A549 (cell line): ENCODE measurements at regions of chr15 and their contacts with region 1.

Region 1: GRCh38 chr15:57340682-57341259 is 35.5 kb upstream of the CGNL1 start:
- DNase-seq: peak; percentile 50 to 76
- ATAC-seq: peak; percentile 76 to 88; a peak in 5 of 6 replicates
- H3K4me3 ChIP-seq: no peak overlapping the region
- H3K27ac ChIP-seq: no peak overlapping the region
- H3K4me1 ChIP-seq: 0 out of 3 replicates have a peak, but pooled peaks cover 4% of the 10 kb centered on the region
- CTCF ChIP-seq: peak; percentile 99
- EP300 ChIP-seq: no peak
- POLR2A ChIP-seq: no peak
- RAD21 ChIP-seq: peak; percentile 100

Region 2: DNA sequence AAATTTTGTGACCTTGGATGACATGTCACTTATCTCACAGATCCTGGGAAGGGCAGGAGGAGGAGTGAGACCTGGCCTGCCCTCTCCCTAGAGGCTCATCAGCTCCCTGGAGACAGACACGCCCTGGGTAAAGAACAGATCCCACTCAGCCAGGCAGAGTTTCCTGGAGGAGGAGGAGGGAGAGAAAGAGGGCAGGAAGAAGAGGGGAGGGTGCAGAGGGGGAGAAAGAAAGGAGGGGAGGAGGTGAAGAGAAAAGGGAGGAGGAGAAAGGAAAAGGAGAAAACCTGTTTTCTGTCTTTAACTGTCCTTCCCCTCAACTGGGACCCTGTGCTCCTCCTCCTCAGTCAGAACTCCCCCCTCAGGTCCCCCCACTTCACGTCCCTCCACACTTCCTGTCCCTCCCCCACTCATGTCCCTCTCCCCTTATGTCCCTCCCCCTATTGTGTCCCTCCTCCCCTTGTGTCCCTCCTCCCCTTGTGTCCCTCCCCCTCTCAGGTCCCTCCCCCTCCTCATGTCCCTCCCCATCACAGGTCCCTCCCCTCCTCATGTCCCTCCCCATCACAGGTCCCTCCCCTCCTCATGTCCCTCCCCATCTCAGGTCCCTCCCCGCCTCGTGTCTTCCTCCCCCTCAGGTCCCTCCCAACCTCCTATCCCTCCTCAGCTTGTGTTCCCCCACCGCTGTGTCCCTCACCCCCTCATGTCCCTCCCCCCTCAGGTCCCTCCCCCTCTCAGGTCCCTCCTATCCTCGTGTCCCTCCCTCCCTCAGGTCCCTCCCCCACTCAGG is 16.8 kb before region 1 on chr15:
- CTCF ChIA-PET with region 1: interaction called, 98 read pairs
- POLR2A ChIA-PET with region 1: no interaction called
- DNase-seq: peak; percentile 96 to 98
- ATAC-seq: peak; percentile 85 to 94
- H3K4me3 ChIP-seq: peak overlapping the region; percentile 32
- H3K27ac ChIP-seq: peak overlapping the region; percentile 91 to 95
- H3K4me1 ChIP-seq: peaks cover 31% of the 10 kb centered on the region
- CTCF ChIP-seq: no peak
- EP300 ChIP-seq: no peak
- POLR2A ChIP-seq: no peak
- RAD21 ChIP-seq: no peak

Region 3: GRCh38 chr15:57375827-57376695 is 35.3 kb after region 1 on chr15 and contains the start of gene CGNL1:
- CTCF ChIA-PET with region 1: interaction called, 40 read pairs
- POLR2A ChIA-PET with region 1: no interaction called
- DNase-seq: peak in 1 of 2 experiments; percentile 62
- ATAC-seq: peak; percentile 80 to 81
- H3K4me3 ChIP-seq: peak within 1 kb of the TSS; percentile 91
- H3K27ac ChIP-seq: peak within 1 kb of the TSS; percentile 66 to 85
- H3K4me1 ChIP-seq: peaks cover 9% of the 10 kb centered on the region; the same call in 2 of the 3 replicates
- CTCF ChIP-seq: no peak
- EP300 ChIP-seq: no peak
- POLR2A ChIP-seq: peak; percentile 12; the same call in 1 of the 2 replicates
- RAD21 ChIP-seq: no peak; a peak in 1 of 5 replicates
- polyA plus RNA-seq, gene CGNL1: 1.8 and 2.3 TPM in 2 replicates

Region 4: GRCh38 chr15:57418661-57419060 is 77.9 kb after region 1 on chr15:
- CTCF ChIA-PET with region 1: interaction called, 11 read pairs
- POLR2A ChIA-PET with region 1: no interaction called
- DNase-seq: no peak
- ATAC-seq: no peak
- H3K4me3 ChIP-seq: no peak overlapping the region
- H3K27ac ChIP-seq: no peak overlapping the region
- H3K4me1 ChIP-seq: peaks cover 17% of the 10 kb centered on the region
- CTCF ChIP-seq: no peak
- EP300 ChIP-seq: no peak
- POLR2A ChIP-seq: no peak
- RAD21 ChIP-seq: no peak

Region 5: DNA sequence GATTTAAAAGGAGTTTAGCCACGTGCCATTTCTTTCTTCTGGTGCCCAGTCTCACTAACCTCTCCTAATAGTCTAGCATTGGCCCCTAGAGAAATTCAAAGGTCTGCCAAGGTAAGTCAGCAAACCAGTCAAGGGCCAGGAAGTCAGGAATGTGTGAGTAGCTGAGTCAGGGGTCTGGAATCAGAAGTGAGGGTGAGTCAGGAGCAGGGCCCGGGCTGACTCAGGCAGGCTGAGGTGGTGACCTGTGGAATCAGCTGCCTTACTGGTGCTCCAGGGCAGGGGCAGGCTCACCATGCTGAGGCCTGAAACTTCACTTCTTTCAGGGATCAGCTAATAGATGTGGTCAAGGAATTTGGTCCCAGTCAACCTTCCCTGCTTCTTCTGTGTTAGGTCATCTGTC is 145.1 kb after region 1 on chr15:
- CTCF ChIA-PET with region 1: interaction called, 18 read pairs
- POLR2A ChIA-PET with region 1: no interaction called
- DNase-seq: peak; percentile 88 to 95
- ATAC-seq: peak; percentile 100
- H3K4me3 ChIP-seq: no peak overlapping the region
- H3K27ac ChIP-seq: peak overlapping the region; percentile 69 to 83
- H3K4me1 ChIP-seq: peaks cover 20% of the 10 kb centered on the region
- CTCF ChIP-seq: no peak
- EP300 ChIP-seq: peak; percentile 32 to 46; a peak in 2 of 5 replicates
- POLR2A ChIP-seq: no peak
- RAD21 ChIP-seq: peak; percentile 13 to 29; a peak in 1 of 5 replicates

Region 6: DNA sequence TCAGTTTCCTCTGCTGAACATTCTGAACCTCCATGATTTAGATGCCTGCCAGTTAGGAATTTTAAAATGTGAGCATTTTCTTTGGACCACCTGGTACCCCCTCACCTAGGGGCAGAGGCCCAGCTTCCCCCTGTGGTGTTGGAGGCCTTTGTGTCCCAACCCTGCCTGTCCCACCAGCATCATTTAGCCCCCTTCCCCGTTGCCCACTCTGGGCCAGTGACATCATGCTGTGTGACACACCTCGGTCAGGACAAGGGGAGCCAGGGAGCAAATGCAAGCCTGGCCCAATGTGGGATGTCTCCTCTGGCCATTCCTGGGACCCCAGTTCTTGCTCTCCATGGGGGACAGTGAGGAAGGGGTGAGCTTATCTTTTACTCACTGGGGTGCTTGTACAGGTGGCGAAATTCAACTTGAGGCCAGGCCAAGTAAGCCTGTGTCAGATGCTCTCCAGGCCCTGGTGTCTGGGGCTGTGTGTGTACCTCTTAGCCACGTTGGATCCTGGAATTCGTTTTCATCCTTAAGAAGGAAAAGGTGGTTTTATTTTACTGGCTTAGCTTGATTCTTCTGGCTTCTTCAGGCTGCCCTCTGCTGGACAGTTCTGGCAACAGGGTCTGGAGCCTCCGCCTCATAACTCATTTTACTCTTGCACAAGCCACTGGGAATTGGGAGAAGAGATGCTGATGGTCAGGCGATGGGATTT is 201.2 kb after region 1 on chr15:
- CTCF ChIA-PET with region 1: interaction called, 475 read pairs
- POLR2A ChIA-PET with region 1: no interaction called
- DNase-seq: peak; percentile 74 to 77
- ATAC-seq: peak; percentile 68 to 88
- H3K4me3 ChIP-seq: no peak overlapping the region
- H3K27ac ChIP-seq: no peak overlapping the region
- H3K4me1 ChIP-seq: peaks cover 4% of the 10 kb centered on the region; the same call in 2 of the 3 replicates
- CTCF ChIP-seq: peak; percentile 90
- EP300 ChIP-seq: no peak
- POLR2A ChIP-seq: no peak
- RAD21 ChIP-seq: peak; percentile 75 to 84